Activated T-helper 2 cell treated with anti-CD3 and anti-CD28 coated beads, Interferon-gamma antibody, Interleukin-2, Interleukin-4, amounts not matched to agents 10 μg/mL and 5 μg/mL and 100 μg/mL, durations not matched to agents 14 hours and 24 hours and 36 hours (primary cell): ENCODE measurements at regions of chr11 and their contacts with region 1.

Region 1: GRCh38 chr11:115869780-115870431 is 365.7 kb upstream of the CADM1 start:
- DNase-seq: peak; percentile 29
- H3K4me3 Mint-ChIP-seq: no peak overlapping the region
- H3K27ac Mint-ChIP-seq: no peak overlapping the region
- H3K4me1 Mint-ChIP-seq: peaks cover 35% of the 10 kb centered on the region
- H3K27me3 Mint-ChIP-seq: peaks cover 2% of the 10 kb centered on the region

Region 2: GRCh38 chr11:115905341-115906000 is 35.6 kb after region 1 on chr11:
- intact Hi-C with region 1: loop called (anchors 2 kb)
- DNase-seq: no peak
- H3K4me3 Mint-ChIP-seq: no peak overlapping the region
- H3K27ac Mint-ChIP-seq: peak overlapping the region; percentile 65
- H3K4me1 Mint-ChIP-seq: peaks cover 22% of the 10 kb centered on the region
- H3K27me3 Mint-ChIP-seq: no peaks in the 10 kb centered on the region

Region 3: GRCh38 chr11:115924744-115925567 is 55.0 kb after region 1 on chr11:
- intact Hi-C with region 1: loop called (anchors 1 kb)
- DNase-seq: peak; percentile 11
- H3K4me3 Mint-ChIP-seq: no peak overlapping the region
- H3K27ac Mint-ChIP-seq: peak overlapping the region; percentile 90
- H3K4me1 Mint-ChIP-seq: peaks cover 53% of the 10 kb centered on the region
- H3K27me3 Mint-ChIP-seq: no peaks in the 10 kb centered on the region

Region 4: DNA sequence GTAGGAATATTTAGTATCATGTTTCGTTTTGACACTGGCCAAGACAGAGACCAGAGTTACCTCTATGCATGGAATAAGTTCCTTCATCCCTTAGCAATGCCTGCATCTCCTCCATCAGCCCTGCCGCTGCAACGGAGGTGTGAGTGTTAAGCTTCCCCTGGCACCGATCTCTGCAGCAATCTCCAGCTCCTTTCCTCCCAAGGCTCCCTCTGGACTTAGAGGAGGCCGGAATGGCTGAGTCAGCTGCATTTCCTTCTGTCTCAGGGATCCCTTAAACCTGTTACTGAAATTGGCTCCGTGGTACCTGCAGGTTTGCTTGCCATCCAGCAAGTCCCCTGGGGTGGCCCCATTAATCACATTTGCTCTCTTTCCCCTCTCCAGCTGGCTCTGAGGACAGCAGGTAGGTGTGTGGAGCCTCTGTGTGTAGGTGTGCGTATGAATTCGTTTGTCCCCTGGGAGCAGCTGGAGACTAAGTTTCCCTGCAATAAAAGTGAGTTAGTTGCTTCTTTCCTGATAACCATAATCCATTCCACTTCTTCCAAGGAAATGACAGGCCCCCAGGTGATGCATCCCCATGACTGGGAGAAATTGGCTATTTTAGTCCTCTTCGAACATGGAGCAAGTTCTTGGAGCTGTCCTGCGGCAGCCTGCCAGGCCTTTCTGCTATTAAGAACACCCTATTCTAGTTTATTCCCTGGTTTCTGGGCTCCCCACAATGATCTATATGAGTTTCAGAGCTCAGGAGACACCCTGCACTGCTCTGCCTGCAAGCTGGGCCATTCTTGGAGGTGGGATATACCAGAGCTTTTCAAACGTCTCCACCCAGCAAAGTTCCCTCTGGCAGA is 91.5 kb after region 1 on chr11:
- intact Hi-C with region 1: no loop called
- DNase-seq: no peak
- H3K4me3 Mint-ChIP-seq: no peak overlapping the region
- H3K27ac Mint-ChIP-seq: no peak overlapping the region
- H3K4me1 Mint-ChIP-seq: no peaks in the 10 kb centered on the region
- H3K27me3 Mint-ChIP-seq: peaks cover 4% of the 10 kb centered on the region

Region 5: DNA sequence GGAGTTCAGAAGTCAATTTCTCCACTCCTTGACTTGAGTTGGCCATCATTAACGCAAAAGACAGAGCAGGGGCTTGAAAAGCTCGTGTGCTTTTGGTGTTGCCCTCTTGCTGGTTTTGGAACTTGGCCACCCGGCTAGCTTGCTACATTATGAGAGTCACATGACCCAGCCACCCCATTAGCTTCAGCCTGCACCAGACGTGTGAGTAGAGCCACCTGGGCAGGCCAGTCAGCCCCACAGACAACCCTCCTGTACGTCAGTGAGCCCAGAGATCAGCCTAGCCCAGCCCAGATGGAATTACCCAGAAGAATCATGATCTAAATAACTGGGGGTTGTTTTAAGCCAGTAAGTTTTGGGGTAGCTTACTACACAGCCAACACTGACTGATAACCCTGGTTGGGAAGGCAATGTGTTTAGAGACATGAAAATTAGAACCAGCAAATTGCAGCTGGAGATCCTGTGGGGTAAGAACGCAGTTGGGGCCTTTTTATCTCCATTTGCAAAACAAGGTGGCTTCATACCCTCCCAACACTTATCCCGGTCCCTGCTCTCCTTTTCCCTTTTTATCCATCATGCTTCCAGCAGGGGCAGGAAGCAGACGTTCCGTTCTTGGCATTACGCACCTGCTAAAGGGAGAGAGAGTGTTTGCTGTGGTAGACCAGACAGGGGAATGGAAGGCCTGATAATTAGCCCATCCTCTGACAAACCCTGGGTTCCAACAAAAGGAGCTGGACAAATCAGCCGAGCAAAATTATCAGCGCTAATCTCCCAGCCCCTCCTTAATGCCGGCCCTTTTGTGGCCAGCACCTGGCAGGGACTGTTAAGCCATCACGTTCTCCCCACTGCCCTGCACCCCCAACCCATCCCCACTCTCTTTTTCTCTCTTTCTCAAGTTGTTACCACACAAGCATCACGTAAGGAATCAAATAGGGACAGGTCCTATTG is 183.0 kb after region 1 on chr11:
- intact Hi-C with region 1: no loop called
- DNase-seq: no peak
- H3K4me3 Mint-ChIP-seq: no peak overlapping the region
- H3K27ac Mint-ChIP-seq: no peak overlapping the region
- H3K4me1 Mint-ChIP-seq: no peaks in the 10 kb centered on the region
- H3K27me3 Mint-ChIP-seq: peaks cover 2% of the 10 kb centered on the region

Region 6: GRCh38 chr11:116073854-116074837 is 204.2 kb after region 1 on chr11:
- intact Hi-C with region 1: loop called (anchors 10 kb)
- DNase-seq: no peak
- H3K4me3 Mint-ChIP-seq: no peak overlapping the region
- H3K27ac Mint-ChIP-seq: no peak overlapping the region
- H3K4me1 Mint-ChIP-seq: no peaks in the 10 kb centered on the region
- H3K27me3 Mint-ChIP-seq: peaks cover 5% of the 10 kb centered on the region

Region 7: DNA sequence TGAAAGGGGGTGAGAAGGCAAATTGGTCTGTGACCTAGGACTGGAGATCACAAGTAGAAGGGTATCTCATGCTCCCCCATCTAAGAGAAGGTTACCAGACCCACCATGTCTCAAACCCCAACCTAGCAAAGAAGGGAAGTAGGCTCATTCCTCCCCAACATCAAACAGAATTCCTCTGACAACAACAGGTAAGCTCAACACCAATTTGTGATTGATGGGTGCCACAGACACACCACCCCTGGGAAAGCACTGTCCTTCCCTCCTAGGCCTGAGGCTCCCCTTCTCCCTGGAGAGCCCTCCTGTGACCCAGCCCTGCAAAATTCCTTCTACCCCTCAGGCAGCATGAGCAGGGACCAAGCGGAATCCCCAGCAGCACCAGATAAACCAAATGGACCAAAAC is 748.6 kb after region 1 on chr11:
- intact Hi-C with region 1: no loop called
- DNase-seq: no peak
- H3K4me3 Mint-ChIP-seq: no peak overlapping the region
- H3K27ac Mint-ChIP-seq: no peak overlapping the region
- H3K4me1 Mint-ChIP-seq: no peaks in the 10 kb centered on the region
- H3K27me3 Mint-ChIP-seq: peaks cover 4% of the 10 kb centered on the region